Posterior cingulate gyrus (tissue), 11 donors: ENCODE measurements at regions of chr4 and their contacts with region 1.

Region 1: DNA sequence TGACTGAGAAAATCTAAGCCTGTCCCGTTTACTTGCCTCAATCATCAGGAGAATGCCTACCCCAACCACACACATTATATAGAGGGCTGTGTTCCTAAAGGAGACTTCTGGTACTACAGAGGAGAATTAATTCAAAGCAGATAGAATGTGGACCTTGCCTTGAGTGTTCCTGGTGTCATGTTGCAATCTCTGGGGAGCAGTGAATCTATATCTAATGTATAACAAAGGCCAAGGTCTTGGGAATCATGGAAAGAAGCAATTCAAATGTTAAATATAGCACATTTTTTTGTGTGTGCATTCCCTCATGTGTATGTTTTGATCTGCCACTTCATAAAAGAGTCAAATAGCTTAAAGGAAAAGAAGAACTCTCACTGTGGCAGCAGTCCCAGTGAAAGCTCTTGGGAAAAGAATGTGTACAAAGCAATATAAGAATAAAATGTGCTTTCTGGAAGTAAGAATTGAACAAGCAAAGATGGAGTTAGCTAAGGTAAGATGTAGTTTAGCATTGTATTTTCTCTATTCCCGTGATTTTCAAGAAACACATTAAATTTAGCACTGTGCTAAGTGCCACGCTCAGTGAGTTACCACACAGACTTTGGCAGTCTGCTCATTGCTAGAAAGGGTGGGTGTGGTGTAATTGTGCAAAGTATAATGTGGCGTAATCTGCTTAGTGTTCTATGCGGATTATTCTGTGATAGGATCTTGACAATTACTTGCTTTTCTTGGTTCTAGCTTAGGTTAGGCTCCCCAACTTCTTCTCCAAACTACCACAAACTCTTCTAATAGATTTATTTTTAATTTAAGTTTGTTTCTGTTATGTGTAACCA is 13.7 kb downstream of the ADH6 start:
- DNase-seq: no peak

Region 2: DNA sequence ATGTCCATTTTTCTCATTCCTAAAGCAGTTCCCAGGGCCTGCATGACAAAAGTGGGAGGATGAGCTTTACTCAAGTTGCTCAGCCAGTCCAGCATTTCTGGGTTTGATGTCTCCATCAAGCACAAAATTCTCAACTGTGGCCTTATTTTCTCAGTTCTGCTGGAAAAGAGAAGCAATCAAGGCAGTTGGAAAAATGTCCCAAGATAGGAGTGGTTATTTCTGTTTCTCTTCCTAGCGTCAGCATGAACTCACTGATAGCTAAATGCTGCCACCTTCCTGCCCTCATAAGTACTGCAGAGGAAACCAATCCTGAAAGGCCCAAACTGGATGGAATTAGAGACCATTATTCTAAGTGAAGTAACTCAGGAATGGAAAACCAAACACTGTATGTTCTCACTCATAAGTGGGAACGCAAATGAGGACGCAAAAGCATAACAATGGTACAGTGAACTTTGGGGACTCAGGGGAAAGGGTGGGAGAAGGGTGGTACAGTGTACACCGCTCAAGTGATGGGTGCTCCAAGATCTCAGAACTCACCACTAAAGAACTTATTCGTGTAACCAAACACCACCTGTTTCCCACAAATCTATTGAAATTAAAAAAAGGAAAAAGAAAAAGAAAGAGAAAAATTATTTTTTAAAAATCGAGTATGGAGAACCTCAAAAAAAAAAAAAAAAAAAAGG is 200.2 kb after region 1 on chr4:
- intact Hi-C with region 1: loop called (anchors 10 kb)
- DNase-seq: peak in 7 of 10 donors; percentile 42 to 84 (median 69)